Activated B cell treated with CpG ODN at 0.5 μM for 24 hours (primary cell): ENCODE measurements at regions of chr1 and their contacts with region 1.

Region 1: DNA sequence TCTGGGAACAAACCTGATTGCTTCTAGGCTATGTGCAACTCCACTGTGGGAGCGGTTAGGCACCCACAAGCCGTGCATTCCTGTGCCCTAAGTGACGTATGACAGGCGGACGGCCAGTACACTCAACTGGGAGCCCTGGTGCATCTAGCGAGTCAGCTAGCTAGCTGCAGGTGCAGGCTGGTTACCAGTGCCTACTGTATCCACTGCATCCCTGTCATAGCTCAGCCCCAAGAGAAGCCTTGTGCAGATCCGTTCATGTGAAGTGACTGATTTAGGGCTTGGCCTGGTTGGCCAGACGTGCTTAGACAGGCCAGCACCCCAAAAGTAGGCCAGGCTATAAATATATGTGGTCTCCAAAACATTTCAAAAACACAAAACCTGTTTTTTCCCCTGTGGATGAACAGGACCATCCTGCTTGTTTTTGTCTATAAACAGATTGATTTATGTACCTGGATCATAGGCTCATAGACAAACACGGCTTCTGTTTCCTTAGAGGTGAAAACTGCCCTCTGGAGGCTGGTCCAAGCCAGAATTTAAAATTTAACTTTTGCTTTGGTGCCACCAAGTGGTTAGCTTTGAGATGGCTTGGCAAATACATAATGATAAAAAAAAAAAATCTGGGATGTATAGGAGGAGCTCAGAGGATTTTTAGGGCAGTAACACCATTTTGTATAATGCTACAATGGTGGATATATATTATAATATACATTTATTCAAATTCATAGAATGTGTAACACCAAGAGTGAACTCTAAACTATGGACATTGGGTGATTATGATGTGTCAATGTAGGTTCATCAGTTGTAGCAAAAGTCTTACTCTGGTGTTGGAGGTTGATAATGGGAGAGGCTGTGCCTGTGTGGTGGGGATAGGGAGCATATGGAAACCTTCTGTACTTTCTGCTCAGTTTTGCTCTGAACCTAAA is 68.5 kb downstream of the GIPC2 start:
- DNase-seq: no peak
- ATAC-seq: peak; percentile 75
- H3K4me3 Mint-ChIP-seq: no peak overlapping the region
- H3K27ac Mint-ChIP-seq: no peak overlapping the region
- H3K4me1 Mint-ChIP-seq: no peaks in the 10 kb centered on the region
- H3K27me3 Mint-ChIP-seq: peaks cover 1% of the 10 kb centered on the region
- CTCF ChIP-seq: peak; percentile 66

Region 2: GRCh38 chr1:76901158-76901767 is 1213.0 kb before region 1 on chr1:
- CTCF ChIA-PET with region 1: no interaction called
- POLR2A ChIA-PET with region 1: no interaction called
- intact Hi-C with region 1: loop called (anchors 2 kb)
- DNase-seq: no peak
- ATAC-seq: no peak
- H3K4me3 Mint-ChIP-seq: no peak overlapping the region
- H3K27ac Mint-ChIP-seq: no peak overlapping the region
- H3K4me1 Mint-ChIP-seq: no peaks in the 10 kb centered on the region
- H3K27me3 Mint-ChIP-seq: peaks cover 2% of the 10 kb centered on the region
- CTCF ChIP-seq: no peak

Region 3: DNA sequence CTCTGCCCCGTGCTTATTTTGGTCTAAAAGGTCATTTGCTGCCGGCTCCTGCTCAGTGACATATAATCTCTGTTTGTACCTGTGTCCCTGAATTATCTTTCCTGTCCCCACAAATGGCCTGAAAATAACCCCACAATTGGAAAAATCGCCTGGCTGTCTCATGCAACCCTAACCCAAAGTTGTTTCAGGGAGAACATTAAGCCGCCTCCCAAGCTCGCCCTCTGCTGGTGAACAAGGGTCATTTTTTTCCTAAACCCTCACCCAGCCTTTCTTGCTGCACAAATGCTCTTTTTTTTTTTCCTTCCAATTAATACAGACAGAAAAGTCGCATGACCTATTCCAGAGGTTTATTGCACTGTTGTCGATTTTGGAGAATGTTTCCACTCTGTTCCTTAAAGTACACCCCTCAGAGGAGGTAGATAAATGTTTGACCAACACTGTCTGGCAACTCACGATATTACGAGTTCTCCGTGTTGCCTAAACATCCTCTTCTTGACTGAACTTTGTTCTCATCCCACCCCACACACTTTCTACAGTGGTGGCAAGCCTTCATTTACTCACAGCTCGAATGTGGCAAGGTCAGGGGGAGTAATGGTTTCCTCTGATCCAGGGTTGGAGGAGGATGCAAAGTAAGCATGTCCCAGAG is 580.5 kb before region 1 on chr1:
- CTCF ChIA-PET with region 1: no interaction called
- POLR2A ChIA-PET with region 1: no interaction called
- intact Hi-C with region 1: loop called (anchors 10 kb)
- DNase-seq: no peak
- ATAC-seq: no peak
- H3K4me3 Mint-ChIP-seq: no peak overlapping the region
- H3K27ac Mint-ChIP-seq: no peak overlapping the region
- H3K4me1 Mint-ChIP-seq: peaks cover 4% of the 10 kb centered on the region
- H3K27me3 Mint-ChIP-seq: peaks cover 4% of the 10 kb centered on the region
- CTCF ChIP-seq: no peak

Region 4: DNA sequence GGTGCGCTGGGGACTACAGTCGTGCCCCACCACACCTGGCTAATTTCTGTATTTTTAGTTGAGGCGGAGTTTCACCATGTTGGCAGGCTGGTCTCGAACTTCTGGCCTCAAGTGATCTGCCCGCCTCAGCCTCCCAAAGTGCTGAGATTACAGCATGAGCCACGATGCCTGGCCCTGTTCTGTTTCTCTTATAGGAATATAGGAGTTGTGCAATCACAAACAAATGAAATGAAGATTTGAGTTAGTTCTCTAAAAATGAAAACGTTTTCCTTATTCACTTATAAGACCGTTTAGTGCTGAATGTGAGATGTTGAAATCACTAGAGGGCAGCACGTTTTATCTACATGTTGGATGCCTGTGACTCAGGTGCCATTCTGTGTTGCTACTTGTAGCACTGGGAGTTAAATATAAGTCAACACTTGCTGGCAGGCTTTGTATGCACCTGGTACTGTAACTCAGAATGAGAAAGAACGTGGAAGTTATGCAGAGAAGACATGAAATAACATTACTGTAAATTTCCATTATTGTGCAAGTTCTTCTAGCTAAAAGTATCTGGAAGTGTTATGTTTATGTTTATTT is 289.1 kb before region 1 on chr1:
- CTCF ChIA-PET with region 1: interaction called, 21 read pairs
- POLR2A ChIA-PET with region 1: no interaction called
- intact Hi-C with region 1: loop called (anchors 1 kb)
- DNase-seq: no peak
- ATAC-seq: peak; percentile 62
- H3K4me3 Mint-ChIP-seq: no peak overlapping the region
- H3K27ac Mint-ChIP-seq: no peak overlapping the region
- H3K4me1 Mint-ChIP-seq: peaks cover 5% of the 10 kb centered on the region
- H3K27me3 Mint-ChIP-seq: no peaks in the 10 kb centered on the region
- CTCF ChIP-seq: no peak

Region 5: DNA sequence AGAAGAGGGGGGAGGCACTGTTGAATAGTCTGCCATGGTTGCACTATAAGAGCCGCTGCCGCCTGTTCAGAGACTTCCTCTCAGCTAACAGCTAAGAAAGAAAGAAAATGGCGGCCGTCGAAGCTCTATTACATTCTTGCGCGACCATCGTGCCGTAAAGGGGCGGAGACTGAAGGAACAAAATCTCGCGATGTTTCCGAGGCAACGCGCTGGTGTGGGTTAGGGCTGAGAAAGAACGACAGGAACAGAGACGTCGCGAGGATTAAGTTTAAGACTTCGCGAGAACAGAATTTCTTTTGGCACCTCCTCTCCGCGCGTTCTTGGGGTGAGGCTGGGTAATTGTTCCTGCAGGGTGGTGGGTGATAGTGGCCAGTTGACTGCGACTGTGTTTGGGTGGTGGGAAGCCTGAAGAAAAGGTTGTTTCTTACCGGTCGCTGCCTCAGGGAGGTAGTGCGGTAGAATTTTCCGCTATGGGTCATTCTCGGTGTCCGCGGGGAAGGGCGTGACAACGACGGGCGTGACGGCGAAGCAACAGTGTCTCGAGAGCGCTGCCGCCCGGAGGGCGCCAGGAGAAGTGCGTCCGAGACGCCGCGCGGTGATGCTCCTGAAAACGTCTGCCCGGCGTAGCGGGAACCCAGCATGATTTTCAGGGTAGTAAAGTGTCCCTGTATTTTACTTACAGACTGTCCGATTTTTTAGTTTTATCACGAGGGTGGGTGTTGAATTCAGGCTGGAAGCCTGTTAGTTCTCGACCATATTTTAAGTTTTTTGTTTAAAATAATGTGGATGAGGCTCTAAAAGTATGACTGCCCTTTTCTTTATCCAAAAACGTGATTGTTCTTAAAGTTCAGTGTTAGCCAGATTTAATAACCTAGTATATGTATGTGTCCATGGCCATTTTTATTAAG is 135.1 kb before region 1 on chr1 and contains the start of gene FUBP1:
- CTCF ChIA-PET with region 1: interaction called, 7 read pairs
- POLR2A ChIA-PET with region 1: interaction called, 4 read pairs
- intact Hi-C with region 1: loop called (anchors 2 kb)
- DNase-seq: peak; percentile 81
- ATAC-seq: peak; percentile 74
- H3K4me3 Mint-ChIP-seq: no peak within 1 kb of the TSS
- H3K27ac Mint-ChIP-seq: no peak within 1 kb of the TSS
- H3K4me1 Mint-ChIP-seq: peaks cover 31% of the 10 kb centered on the region
- H3K27me3 Mint-ChIP-seq: no peaks in the 10 kb centered on the region
- CTCF ChIP-seq: no peak
- total RNA-seq, gene FUBP1: 259 and 282 TPM in 2 replicates

Region 6: DNA sequence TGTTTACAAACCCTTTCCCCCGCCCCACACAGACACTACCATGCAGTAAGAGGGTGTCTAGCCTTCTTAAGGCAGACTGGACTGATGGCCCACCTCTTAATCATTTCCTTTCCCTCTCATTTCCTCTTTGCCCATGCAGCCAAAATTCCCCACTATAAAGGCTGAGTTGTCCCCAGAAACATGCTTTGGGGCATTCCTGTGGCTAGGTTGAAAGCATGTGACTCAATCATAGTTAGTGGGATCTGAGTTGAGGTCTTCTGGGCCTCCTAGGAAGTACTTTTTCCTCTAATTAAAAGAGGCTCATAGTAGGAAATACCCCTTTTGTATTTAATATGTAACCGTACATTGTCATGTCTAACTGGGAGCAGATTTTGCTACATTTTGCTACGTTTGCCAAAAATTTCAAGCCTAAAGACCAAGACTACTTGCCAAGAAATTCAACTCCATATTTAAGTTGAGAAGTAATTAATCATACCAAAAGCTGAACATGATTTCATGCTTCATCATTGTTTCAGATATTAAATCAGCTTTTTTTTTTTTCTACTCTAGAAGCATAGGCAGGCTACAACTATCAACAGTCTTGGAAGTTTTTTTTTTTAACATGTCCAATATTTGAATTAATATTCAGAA is 717.6 kb after region 1 on chr1:
- CTCF ChIA-PET with region 1: no interaction called
- POLR2A ChIA-PET with region 1: no interaction called
- intact Hi-C with region 1: no loop called
- DNase-seq: no peak
- ATAC-seq: no peak
- H3K4me3 Mint-ChIP-seq: no peak overlapping the region
- H3K27ac Mint-ChIP-seq: no peak overlapping the region
- H3K4me1 Mint-ChIP-seq: no peaks in the 10 kb centered on the region
- H3K27me3 Mint-ChIP-seq: no peaks in the 10 kb centered on the region
- CTCF ChIP-seq: no peak